Activated B cell treated with CpG ODN at 0.5 μM for 24 hours (primary cell): ENCODE measurements at regions of chr1 and their contacts with region 1.

Region 1: GRCh38 chr1:35442734-35443133 is 114.5 kb downstream of the KIAA0319L start:
- DNase-seq: no peak
- ATAC-seq: no peak
- H3K4me3 Mint-ChIP-seq: no peak overlapping the region
- H3K27ac Mint-ChIP-seq: no peak overlapping the region
- H3K4me1 Mint-ChIP-seq: no peaks in the 10 kb centered on the region
- H3K27me3 Mint-ChIP-seq: no peaks in the 10 kb centered on the region
- CTCF ChIP-seq: no peak

Region 2: DNA sequence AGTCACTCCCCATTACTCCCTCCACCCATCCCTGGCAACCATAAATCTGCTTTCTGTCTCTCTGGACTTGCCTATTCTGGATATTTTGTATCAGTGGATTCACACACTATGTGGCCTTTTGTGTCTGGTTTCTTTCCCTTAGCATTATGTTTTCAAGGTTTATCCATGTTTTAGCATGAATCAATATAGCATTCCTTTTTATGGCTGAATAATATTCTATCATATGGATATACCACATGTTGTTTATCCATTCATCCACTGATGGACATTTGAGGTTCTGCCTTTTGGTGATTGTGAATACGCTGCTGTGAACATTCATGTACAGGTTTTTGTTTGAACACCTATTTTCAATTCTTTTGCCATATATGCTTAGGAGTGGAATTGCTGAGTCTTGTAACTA is 33.8 kb before region 1 on chr1:
- CTCF ChIA-PET with region 1: no interaction called
- POLR2A ChIA-PET with region 1: interaction called, 11 read pairs
- intact Hi-C with region 1: no loop called
- DNase-seq: no peak
- ATAC-seq: no peak
- H3K4me3 Mint-ChIP-seq: no peak overlapping the region
- H3K27ac Mint-ChIP-seq: no peak overlapping the region
- H3K4me1 Mint-ChIP-seq: no peaks in the 10 kb centered on the region
- H3K27me3 Mint-ChIP-seq: no peaks in the 10 kb centered on the region
- CTCF ChIP-seq: no peak